Activated CD4-positive, alpha-beta T cell treated with anti-CD3 and anti-CD28 coated beads for 36 hours (primary cell): ENCODE measurements at regions of chr19 and their contacts with region 1.

Region 1: GRCh38 chr19:8389891-8390616 is at the start of gene RAB11B:
- DNase-seq: peak; percentile 99
- ATAC-seq: peak; percentile 94
- H3K4me3 Mint-ChIP-seq: peak within 1 kb of the TSS; percentile 92
- H3K27ac Mint-ChIP-seq: peak within 1 kb of the TSS; percentile 97
- H3K4me1 Mint-ChIP-seq: peaks cover 23% of the 10 kb centered on the region
- H3K27me3 Mint-ChIP-seq: no peaks in the 10 kb centered on the region
- total RNA-seq, gene RAB11B: 74.3 to 93.4 TPM

Region 2: GRCh38 chr19:7535035-7535992 is 854.7 kb before region 1 on chr19 and contains the start of gene PNPLA6:
- CTCF ChIA-PET with region 1: no interaction called
- POLR2A ChIA-PET with region 1: no interaction called
- intact Hi-C with region 1: loop called in 1 of 2 experiments (anchors 1 kb)
- DNase-seq: peak; percentile 97
- ATAC-seq: peak; percentile 80
- H3K4me3 Mint-ChIP-seq: peak within 1 kb of the TSS; percentile 91
- H3K27ac Mint-ChIP-seq: peak within 1 kb of the TSS; percentile 84
- H3K4me1 Mint-ChIP-seq: peaks cover 20% of the 10 kb centered on the region
- H3K27me3 Mint-ChIP-seq: no peaks in the 10 kb centered on the region
- total RNA-seq, gene PNPLA6: 82.2 to 108 TPM

Region 3: DNA sequence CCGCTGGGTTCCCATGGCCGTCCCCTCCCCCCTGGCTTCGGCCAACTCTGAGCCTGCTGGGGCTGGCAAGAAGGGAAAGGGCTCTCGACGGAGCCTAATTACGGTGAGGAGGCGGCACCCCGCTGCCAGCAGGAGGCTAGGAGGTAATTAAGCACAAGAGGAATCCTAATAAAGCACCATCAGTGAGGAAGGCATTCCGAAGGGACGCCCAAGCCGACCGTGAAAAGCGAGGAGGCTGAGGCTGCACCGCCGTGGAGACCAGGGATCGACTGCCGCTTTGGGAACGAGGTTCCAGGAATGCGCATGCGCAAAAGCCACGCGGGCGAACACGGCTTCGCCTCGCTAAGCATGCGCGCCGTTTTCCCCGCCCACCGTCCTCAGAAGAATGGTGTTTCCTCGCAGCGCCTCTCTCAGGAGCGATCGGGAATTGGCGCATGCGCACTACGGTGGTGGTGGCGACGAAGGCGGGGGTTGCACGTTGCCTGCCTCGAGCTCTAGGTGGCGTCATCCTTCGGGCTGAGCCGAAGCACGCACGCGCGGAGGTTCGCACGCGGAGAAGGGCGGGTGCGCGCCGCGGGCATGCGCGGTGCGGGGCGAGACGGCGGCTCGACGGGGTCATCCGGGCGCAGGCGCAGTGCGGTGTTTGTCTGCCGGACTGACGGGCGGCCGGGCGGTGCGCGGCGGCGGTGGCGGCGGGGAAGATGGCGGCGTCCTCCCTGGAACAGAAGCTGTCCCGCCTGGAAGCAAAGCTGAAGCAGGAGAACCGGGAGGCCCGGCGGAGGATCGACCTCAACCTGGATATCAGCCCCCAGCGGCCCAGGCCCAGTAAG is 486.6 kb before region 1 on chr19 and contains the start of gene MAP2K7:
- CTCF ChIA-PET with region 1: no interaction called
- POLR2A ChIA-PET with region 1: no interaction called
- intact Hi-C with region 1: loop called in 1 of 2 experiments (anchors 1 kb)
- DNase-seq: peak; percentile 100
- ATAC-seq: peak; percentile 91
- H3K4me3 Mint-ChIP-seq: peak within 1 kb of the TSS; percentile 85
- H3K27ac Mint-ChIP-seq: peak within 1 kb of the TSS; percentile 92
- H3K4me1 Mint-ChIP-seq: peaks cover 22% of the 10 kb centered on the region
- H3K27me3 Mint-ChIP-seq: no peaks in the 10 kb centered on the region
- total RNA-seq, gene MAP2K7: 32.2 to 33.7 TPM

Region 4: GRCh38 chr19:8050274-8051096 is 339.6 kb before region 1 on chr19:
- CTCF ChIA-PET with region 1: no interaction called
- POLR2A ChIA-PET with region 1: no interaction called
- intact Hi-C with region 1: loop called in 1 of 2 experiments (anchors 1 kb)
- DNase-seq: peak; percentile 98
- ATAC-seq: peak; percentile 99
- H3K4me3 Mint-ChIP-seq: peak overlapping the region; percentile 36
- H3K27ac Mint-ChIP-seq: no peak overlapping the region
- H3K4me1 Mint-ChIP-seq: peaks cover 11% of the 10 kb centered on the region
- H3K27me3 Mint-ChIP-seq: peaks cover 4% of the 10 kb centered on the region

Region 5: GRCh38 chr19:8342684-8343482 is 47.2 kb before region 1 on chr19 and contains the start of gene KANK3:
- CTCF ChIA-PET with region 1: no interaction called
- POLR2A ChIA-PET with region 1: no interaction called
- intact Hi-C with region 1: loop called (anchors 1 kb)
- DNase-seq: peak; percentile 96
- ATAC-seq: peak; percentile 100
- H3K4me3 Mint-ChIP-seq: peak within 1 kb of the TSS; percentile 64
- H3K27ac Mint-ChIP-seq: no peak within 1 kb of the TSS
- H3K4me1 Mint-ChIP-seq: peaks cover 6% of the 10 kb centered on the region
- H3K27me3 Mint-ChIP-seq: peaks cover 12% of the 10 kb centered on the region
- total RNA-seq, gene KANK3: 0.98 to 1.1 TPM

Region 6: DNA sequence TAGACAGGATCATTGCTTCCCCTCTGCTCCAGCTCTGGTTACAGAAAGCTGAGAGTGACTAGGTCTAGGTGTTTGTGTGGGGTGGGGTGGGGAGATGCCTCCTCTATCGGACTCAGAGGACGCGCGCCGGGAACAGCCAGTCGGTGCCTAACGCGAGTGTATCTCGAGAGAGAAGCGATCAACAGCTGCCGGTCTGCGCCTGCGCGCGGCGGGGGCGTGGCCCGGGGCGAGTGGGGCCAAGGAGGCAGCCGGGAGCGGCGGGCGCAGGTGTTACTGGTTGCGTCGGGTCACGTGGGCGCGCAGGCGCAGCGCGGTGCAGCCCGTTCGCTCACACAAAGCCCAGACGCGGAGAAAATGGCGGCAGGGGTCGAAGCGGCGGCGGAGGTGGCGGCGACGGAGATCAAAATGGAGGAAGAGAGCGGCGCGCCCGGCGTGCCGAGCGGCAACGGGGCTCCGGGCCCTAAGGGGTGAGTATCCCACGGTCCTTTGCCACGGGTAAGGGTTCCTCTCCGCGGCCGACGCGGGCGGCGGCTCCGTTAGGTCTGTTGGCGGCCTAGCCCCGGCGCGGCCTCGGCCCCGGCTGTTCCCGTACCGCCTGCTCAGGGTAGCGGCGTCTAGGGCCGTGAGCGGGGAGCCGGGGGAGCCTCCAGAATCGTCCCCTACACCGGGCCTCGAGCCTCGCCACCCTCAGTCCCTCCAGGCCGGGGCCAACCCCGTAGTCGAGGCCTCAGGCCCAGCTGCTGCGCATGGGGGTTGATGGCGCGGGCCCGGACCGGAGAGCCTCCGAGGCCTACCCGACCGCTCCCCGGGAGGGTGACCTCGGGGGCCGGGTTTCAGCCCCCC is 54.8 kb after region 1 on chr19 and contains the start of gene HNRNPM:
- CTCF ChIA-PET with region 1: no interaction called
- POLR2A ChIA-PET with region 1: no interaction called
- intact Hi-C with region 1: loop called (anchors 1 kb)
- DNase-seq: peak; percentile 100
- ATAC-seq: peak; percentile 93
- H3K4me3 Mint-ChIP-seq: peak within 1 kb of the TSS; percentile 94
- H3K27ac Mint-ChIP-seq: peak within 1 kb of the TSS; percentile 97
- H3K4me1 Mint-ChIP-seq: peaks cover 39% of the 10 kb centered on the region
- H3K27me3 Mint-ChIP-seq: no peaks in the 10 kb centered on the region
- total RNA-seq, gene HNRNPM: 250 to 304 TPM